AG04449 (cell line): ENCODE measurements at regions of chr3 and their contacts with region 1.

Region 1: DNA sequence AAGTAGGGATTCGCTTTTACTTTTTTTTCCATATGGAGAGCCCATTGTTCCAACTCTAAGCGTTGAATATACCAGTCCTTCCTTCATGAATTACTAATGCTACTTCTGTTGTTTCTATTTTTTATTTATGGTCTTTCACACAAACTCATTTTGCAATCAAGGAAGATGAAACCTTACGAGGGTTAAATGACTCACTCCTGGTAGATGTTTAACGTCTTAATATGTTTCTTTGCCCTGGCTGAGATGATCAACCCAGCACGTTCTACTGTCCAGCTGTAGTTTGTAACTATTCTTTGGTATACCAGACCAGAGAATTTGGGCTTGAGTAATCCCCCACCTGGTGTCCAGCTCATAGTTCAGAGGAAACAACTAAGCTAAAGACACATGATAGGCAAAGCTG is 23.1 kb downstream of the CDCP1 start:
- DNase-seq: peak; percentile 78
- H3K4me3 ChIP-seq: no peak overlapping the region
- CTCF ChIP-seq: no peak

Region 2: DNA sequence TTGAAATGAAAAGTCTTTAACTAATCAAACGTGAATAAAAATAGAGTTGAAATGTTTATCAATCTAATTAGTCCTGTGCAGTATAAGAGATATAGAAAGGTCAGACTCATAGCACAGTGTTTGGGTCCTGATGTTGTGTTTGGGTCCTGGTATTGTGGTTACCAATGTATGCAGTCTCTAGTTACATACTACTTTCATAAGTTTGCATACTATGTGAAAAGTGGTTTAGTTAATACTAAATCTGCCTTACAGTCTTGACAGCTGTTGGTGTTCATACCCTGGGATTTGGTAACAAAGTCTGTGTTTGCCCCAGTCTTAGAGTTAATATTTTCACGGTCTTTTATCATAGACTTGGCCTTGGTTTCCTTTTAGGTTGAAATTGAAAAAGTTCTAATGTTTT is 319.7 kb before region 1 on chr3:
- CTCF ChIA-PET with region 1: no interaction called
- POLR2A ChIA-PET with region 1: no interaction called
- DNase-seq: no peak
- H3K4me3 ChIP-seq: no peak overlapping the region
- CTCF ChIP-seq: no peak

Region 3: GRCh38 chr3:45105855-45106671 is 17.0 kb before region 1 on chr3:
- CTCF ChIA-PET with region 1: interaction called, 3 read pairs
- POLR2A ChIA-PET with region 1: interaction called, 12 read pairs
- DNase-seq: peak; percentile 41
- H3K4me3 ChIP-seq: no peak overlapping the region
- CTCF ChIP-seq: no peak

Region 4: DNA sequence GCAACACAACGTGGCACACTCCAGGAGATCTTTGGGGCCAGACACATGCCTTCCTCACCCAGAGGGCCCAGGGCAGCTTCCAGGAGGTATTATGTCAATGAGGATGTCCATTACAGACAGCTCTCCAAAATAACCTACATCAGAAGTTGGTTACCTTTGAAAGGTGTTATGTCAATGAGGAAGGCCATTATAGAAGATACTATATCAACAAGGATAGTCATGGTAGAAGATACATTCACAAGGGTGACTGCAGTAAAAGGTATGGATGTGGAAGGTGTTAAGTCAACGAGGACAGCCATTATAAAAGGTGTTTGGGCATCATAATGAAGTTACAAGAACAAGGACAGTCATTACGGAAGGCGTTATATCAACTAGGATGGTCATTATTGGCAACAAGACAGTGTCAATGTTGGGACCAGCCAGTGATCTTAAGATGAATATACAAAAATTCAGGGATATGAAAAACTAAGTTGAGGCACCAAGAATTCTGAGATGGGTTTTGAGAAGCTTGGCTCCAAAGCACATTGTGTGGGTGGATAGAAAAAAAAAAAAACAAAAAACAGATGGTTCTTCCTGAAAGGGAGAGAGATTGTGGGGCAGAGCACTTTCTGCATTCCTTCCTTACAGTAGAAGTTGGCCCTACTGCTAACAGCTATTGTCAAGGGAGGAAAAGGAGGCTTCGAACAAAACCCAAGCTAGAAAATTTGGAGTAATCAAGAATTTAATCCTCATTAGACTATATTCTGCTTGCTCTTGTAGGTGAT is 11.9 kb after region 1 on chr3:
- CTCF ChIA-PET with region 1: interaction called, 11 read pairs
- POLR2A ChIA-PET with region 1: interaction called, 12 read pairs
- DNase-seq: no peak
- H3K4me3 ChIP-seq: no peak overlapping the region
- CTCF ChIP-seq: no peak

Region 5: GRCh38 chr3:45154641-45155147 is 31.7 kb after region 1 on chr3:
- CTCF ChIA-PET with region 1: interaction called, 3 read pairs
- POLR2A ChIA-PET with region 1: interaction called, 14 read pairs
- DNase-seq: no peak
- H3K4me3 ChIP-seq: no peak overlapping the region
- CTCF ChIP-seq: no peak